ENCODE measurements at regions of chr2 and their contacts with region 1.

Region 1: GRCh38 chr2:62431512-62431911 is 74.5 kb downstream of the TMEM17 start:
- DNase-seq: no peak
- H3K4me3 ChIP-seq: no peak overlapping the region
- CTCF ChIP-seq: no peak

Region 2: GRCh38 chr2:62375113-62375420 is 56.4 kb before region 1 on chr2:
- in situ Hi-C with region 1: loop called (anchors 5 kb)
- DNase-seq: no peak
- H3K4me3 ChIP-seq: no peak overlapping the region
- CTCF ChIP-seq: no peak

Region 3: DNA sequence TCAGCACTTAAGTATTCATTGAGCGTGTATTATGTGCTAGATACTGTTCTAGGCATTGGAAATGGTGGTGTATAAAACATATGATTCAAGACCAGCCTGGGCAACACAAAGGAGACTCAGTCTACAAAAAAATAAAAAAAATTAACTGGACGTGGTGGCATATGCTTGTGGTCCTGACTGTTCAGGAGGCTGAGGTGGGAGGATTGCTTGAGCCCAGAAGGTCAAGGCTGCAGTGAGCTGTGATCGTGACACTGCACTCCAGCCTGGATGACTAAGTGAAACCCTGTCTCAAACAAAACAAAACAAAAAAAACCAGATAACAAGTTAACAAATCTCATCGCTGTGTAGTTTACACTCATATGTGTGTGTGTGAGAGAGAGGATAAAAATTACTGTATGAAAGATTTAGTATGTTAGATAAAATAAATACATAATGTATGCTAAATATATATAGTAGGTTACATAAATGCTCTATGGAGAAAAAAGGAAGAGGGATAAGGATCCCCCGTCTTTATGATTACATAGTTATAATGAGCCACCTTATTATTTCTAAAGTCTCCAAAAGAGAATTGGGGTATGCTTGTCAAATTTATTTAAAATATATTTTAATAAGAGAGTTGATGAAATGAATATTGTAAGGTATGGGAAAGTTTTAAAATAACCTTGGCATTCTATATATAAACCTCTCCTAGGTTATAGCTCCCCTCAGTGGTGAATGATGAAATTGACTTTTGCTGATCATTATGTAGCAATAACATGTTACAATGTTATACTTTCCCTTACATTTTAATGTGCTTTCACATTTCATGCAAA is 343.2 kb after region 1 on chr2:
- in situ Hi-C with region 1: loop called (anchors 5 kb)
- DNase-seq: peak; percentile 37
- H3K4me3 ChIP-seq: no peak overlapping the region
- CTCF ChIP-seq: peak; percentile 38

Measured in astrocyte of the cerebellum (primary cell).